ENCODE measurements at regions of chr13 and their contacts with region 1.

Region 1: DNA sequence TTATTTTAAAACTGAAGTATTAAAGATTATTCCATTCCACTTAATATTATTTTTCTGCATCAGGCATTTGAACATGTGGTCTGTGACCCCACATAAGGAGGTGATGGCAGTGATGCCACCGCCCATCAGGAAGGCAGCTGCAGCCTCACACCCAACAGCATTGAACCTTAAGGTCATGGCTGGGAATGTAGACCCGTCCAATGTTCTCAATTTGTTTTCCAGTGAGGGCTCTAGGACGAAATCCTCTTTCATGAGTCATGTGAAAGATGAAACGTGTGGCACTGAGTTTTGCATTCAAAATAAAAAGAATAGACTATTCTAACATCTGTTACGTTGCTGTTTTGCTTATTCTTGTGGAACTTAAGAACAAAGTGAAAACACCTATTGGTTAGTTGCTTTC is 74.5 kb upstream of the ANKRD10 start:
- DNase-seq: no peak
- ATAC-seq: no peak
- H3K4me3 ChIP-seq: no peak overlapping the region
- H3K27ac ChIP-seq: no peak overlapping the region
- H3K4me1 ChIP-seq: no peaks in the 10 kb centered on the region
- H3K27me3 ChIP-seq: no peaks in the 10 kb centered on the region
- CTCF ChIP-seq: no peak
- POLR2A ChIP-seq: no peak

Region 2: GRCh38 chr13:110950819-110951570 is 38.3 kb before region 1 on chr13:
- in situ Hi-C with region 1: loop called in 1 of 4 experiments (anchors 5 kb)
- intact Hi-C with region 1: no loop called
- DNase-seq: no peak
- ATAC-seq: no peak
- H3K4me3 ChIP-seq: no peak overlapping the region
- H3K27ac ChIP-seq: no peak overlapping the region
- H3K4me1 ChIP-seq: no peaks in the 10 kb centered on the region
- H3K27me3 ChIP-seq: no peaks in the 10 kb centered on the region
- CTCF ChIP-seq: no peak
- POLR2A ChIP-seq: no peak